ENCODE measurements at regions of chr10 and their contacts with region 1.

Region 1: DNA sequence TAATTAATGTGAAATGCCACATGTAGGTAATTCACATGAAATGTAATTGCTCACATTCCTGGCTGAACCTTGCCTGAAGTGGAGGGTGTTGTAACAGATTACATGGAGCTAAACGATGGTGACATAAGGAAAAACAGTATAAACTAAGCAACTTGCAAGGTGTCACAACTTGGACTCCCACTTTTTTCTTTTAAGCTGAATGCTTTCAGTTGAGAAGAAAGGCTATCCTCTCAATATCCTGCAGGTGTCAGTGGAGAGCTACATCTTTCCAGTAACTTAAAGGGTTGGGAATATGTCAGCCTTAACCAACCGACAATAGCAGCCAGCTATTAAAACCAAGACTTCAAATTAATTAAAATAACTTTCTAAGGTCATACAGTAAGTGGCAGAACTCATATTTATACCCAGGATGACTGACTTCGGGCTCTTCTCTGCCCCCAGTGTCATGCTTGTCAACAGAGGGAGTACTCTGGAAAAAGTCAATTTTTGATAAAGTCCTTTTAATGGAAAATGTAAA is 33.7 kb downstream of the NRBF2 start:
- DNase-seq: peak; percentile 17
- H3K4me3 Mint-ChIP-seq: no peak overlapping the region
- H3K27ac Mint-ChIP-seq: no peak overlapping the region
- H3K4me1 Mint-ChIP-seq: peaks cover 41% of the 10 kb centered on the region
- H3K27me3 Mint-ChIP-seq: no peaks in the 10 kb centered on the region

Region 2: DNA sequence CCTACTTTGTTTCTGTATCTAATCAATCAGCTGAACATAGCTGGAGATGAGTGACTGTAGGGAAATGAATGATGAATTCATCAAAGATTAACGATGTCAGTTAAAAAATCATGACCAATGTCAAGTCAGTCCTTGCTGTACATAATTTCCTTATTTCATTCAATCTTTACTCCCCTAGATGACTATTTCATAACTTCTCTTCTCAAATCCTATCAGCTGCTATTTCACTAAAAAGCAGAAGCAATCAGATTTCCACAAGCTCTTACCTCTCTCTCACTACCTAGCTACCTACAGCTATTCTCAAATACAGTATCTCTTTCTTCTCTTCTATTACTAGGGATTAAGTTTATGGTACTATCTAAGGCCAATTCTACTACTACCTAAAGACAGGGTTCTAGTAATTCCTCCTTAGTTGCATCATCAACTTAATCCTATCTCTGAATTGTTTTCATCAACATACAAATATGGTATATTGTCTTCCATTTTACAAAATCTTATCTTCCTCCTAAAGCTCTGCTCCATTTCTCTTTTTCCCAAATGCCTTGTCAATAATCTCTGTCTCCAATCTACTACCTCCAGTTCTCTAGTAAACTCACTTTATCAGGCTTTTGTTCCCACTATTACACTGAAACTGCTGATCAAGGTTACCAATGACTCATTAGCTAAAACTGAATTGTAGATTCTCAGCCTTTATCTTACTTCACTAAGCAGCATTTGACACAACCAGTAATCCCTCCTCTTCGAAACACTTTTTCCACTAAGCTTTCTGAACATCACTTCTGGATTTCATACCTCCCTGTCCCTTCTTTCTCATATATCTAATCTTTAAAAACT is 270.5 kb after region 1 on chr10:
- intact Hi-C with region 1: loop called (anchors 5 kb)
- DNase-seq: no peak
- H3K4me3 Mint-ChIP-seq: no peak overlapping the region
- H3K27ac Mint-ChIP-seq: no peak overlapping the region
- H3K4me1 Mint-ChIP-seq: peaks cover 2% of the 10 kb centered on the region
- H3K27me3 Mint-ChIP-seq: peaks cover 2% of the 10 kb centered on the region

Region 3: GRCh38 chr10:63720072-63720537 is 553.3 kb after region 1 on chr10:
- intact Hi-C with region 1: loop called (anchors 1 kb)
- DNase-seq: peak; percentile 17
- H3K4me3 Mint-ChIP-seq: peak overlapping the region; percentile 51
- H3K27ac Mint-ChIP-seq: no peak overlapping the region
- H3K4me1 Mint-ChIP-seq: peaks cover 34% of the 10 kb centered on the region
- H3K27me3 Mint-ChIP-seq: peaks cover 4% of the 10 kb centered on the region

Region 4: DNA sequence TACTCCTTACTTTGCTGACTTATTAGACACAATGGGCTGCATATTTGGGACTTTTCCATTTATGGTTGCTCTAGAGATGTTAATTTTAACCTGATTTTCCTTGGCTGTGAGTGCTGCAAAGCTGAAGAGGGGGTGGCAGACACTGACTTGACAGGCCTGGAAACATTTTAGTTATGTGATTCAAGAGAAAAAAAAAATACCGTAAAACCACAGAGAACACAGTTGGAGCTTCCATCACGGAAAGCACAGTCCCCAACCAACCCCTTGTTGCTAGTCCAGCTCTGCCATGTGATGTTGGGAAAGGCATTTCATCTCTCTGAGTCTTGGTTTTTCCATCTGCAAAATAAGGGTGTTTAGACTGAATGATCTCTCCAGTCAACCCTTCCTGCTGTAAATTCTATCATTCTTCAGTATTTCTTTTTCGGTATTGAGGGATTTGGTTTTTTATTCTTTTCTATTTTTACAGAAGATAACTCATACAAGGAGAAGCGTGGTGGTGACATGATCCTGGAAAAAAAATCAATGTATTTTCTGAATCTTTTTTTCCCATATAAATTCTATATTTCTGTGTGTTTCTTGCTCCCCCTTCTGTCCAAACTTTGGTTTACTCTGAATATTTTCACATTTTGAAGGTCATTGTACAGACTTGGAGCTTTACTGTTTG is 600.5 kb after region 1 on chr10:
- intact Hi-C with region 1: loop called (anchors 2 kb)
- DNase-seq: no peak
- H3K4me3 Mint-ChIP-seq: no peak overlapping the region
- H3K27ac Mint-ChIP-seq: no peak overlapping the region
- H3K4me1 Mint-ChIP-seq: no peaks in the 10 kb centered on the region
- H3K27me3 Mint-ChIP-seq: peaks cover 5% of the 10 kb centered on the region

Region 5: GRCh38 chr10:63819753-63820329 is 653.0 kb after region 1 on chr10:
- intact Hi-C with region 1: loop called (anchors 2 kb)
- DNase-seq: no peak
- H3K4me3 Mint-ChIP-seq: no peak overlapping the region
- H3K27ac Mint-ChIP-seq: no peak overlapping the region
- H3K4me1 Mint-ChIP-seq: no peaks in the 10 kb centered on the region
- H3K27me3 Mint-ChIP-seq: peaks cover 13% of the 10 kb centered on the region

Measured in activated T-helper 1 cell treated with anti-CD3 and anti-CD28 coated beads, Interleukin-12 subunit alpha, Interleukin-12 subunit beta, Interleukin-2, Interleukin-4 antibody, amounts not matched to agents 30 ng/mL and 10 ng/mL and 1 ng/mL, durations not matched to agents 14 hours and 24 hours and 36 hours (primary cell).